HEK293 (cell line): ENCODE measurements at regions of chr6 and their contacts with region 1.

Region 1: GRCh38 chr6:53492860-53493634 is 51.9 kb downstream of the GCLC start:
- H3K4me3 ChIP-seq: peak overlapping the region; percentile 12; the same call in 1 of the 2 replicates
- H3K27ac ChIP-seq: no peak overlapping the region
- H3K4me1 ChIP-seq: peaks cover 2% of the 10 kb centered on the region; the same call in 1 of the 2 replicates
- CTCF ChIP-seq: peak; percentile 30

Region 2: GRCh38 chr6:53513519-53513966 is 20.5 kb after region 1 on chr6:
- CTCF ChIA-PET with region 1: interaction called, 26 read pairs
- POLR2A ChIA-PET with region 1: no interaction called
- H3K4me3 ChIP-seq: no peak overlapping the region
- H3K27ac ChIP-seq: no peak overlapping the region
- H3K4me1 ChIP-seq: no peaks in the 10 kb centered on the region
- CTCF ChIP-seq: no peak

Region 3: GRCh38 chr6:53544470-53545308 is 51.6 kb after region 1 on chr6 and contains the start of gene GCLC:
- CTCF ChIA-PET with region 1: interaction called, 29 read pairs
- POLR2A ChIA-PET with region 1: interaction called, 9 read pairs
- H3K4me3 ChIP-seq: peak within 1 kb of the TSS; percentile 91
- H3K27ac ChIP-seq: peak within 1 kb of the TSS; percentile 80
- H3K4me1 ChIP-seq: peaks cover 10% of the 10 kb centered on the region; the same call in 1 of the 2 replicates
- CTCF ChIP-seq: peak; percentile 87

Region 4: DNA sequence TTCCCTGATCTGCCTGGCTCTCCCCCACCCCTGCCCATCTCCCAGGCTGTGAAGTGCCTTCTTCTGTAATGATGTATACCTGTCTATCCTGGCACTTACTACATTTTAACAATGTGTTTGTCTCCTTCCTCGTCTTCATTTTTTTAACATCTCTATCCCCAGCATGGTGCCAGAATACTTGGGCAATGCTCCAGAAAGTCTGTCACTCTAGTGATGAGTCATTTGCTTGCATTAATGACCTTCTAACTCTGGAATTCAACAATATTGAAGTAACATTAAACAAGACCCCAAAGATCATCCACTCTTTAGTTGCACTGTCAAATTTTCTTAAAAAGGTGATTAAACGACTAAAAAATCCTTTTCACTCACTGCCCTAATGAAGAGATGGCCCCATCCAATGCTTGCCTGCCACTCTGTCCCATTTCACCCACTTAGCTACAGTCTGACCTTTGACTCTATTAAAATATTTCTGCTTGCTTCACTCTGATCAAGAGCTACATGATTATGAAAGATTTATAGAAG is 180.2 kb after region 1 on chr6:
- CTCF ChIA-PET with region 1: interaction called, 21 read pairs
- POLR2A ChIA-PET with region 1: no interaction called
- H3K4me3 ChIP-seq: no peak overlapping the region
- H3K27ac ChIP-seq: 0 out of 2 replicates have a peak overlapping the region, but pooled peaks have one; percentile 5
- H3K4me1 ChIP-seq: peaks cover 11% of the 10 kb centered on the region
- CTCF ChIP-seq: no peak

Region 5: DNA sequence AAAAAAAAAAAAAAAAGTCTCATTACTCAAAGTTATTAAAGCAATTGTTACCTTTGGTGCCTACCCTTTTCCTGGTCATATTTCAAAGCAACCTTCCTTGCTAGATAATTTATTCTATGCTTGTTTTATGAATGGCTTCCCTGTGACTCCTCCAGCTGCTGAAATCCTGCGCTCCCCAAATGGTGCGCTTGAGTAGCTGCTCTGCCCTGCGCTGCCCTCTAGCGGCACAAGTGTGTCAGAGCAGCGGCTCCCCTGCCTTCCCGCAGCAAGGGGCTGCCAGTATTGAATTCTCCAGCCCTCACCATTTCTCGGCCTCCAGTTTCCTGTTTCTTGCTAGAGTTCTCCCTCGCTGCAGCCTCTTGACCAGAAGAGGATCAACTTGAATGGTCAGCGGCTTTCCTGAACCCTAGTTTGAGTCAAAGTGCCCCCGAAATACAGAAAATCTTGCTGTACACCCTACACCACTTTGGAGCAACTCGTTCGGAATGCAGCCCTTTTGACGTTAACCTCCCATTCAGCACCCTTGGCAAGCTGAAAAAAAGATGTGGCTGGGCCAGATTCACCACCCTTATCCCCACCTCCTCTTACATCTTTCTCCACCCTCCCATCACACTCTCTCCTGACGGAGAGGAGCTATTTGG is 232.9 kb after region 1 on chr6:
- CTCF ChIA-PET with region 1: interaction called, 270 read pairs
- POLR2A ChIA-PET with region 1: interaction called, 3 read pairs
- H3K4me3 ChIP-seq: no peak overlapping the region
- H3K27ac ChIP-seq: no peak overlapping the region
- H3K4me1 ChIP-seq: peaks cover 6% of the 10 kb centered on the region; the same call in 1 of the 2 replicates
- CTCF ChIP-seq: peak; percentile 82

Region 6: GRCh38 chr6:53786832-53787231 is 293.8 kb after region 1 on chr6:
- CTCF ChIA-PET with region 1: no interaction called
- POLR2A ChIA-PET with region 1: no interaction called
- H3K4me3 ChIP-seq: no peak overlapping the region
- H3K27ac ChIP-seq: no peak overlapping the region
- H3K4me1 ChIP-seq: no peaks in the 10 kb centered on the region
- CTCF ChIP-seq: no peak